ENCODE measurements at regions of chr22 and their contacts with region 1.

Region 1: DNA sequence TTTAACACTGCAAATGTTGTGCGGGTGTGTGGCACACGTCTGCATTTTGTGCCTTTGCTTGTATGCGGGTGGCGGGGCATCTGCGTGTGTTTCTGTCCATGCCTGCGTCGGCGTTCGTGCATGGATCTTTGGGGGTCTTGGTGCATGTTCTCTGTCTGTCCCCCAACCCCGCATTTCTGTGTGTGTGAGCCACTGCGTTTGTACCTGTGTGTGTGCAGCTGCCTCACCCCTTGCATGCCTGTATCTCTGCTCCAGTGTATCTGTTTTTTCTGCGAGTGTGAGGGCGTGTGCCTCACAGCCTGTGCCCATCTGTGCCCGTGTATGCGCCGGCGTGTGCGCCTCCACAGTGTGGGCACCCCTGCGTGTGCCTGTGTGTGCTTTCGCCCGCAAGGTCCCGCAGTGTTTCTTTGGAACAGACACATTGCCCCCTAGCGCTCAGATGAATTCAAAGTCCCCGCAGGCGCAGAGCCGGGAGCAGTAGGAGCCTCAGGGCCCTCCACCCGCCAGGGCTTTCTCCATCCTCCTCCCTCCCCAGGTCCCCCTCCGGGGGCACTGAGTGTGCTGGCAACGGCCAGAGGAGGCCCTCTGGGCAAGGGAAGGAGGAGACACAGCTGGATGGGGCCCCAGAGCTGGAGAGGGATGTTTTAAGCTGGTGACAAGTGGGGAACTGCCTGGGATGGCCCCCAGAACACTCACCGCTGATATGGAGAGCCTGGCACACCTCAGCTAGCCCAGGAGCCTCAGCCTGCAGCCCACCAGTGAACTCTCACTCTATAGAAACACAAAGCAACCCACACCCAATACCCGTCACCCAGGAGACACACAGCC is 3.1 kb upstream of the MN1 start:
- DNase-seq: peak; percentile 47 to 72
- ATAC-seq: peak; percentile 32 to 38
- H3K4me3 ChIP-seq: no peak overlapping the region
- H3K27ac ChIP-seq: peak overlapping the region in 2 of 4 donors; percentile 14 to 32
- H3K4me1 ChIP-seq: peaks cover 10 to 37% of the 10 kb centered on the region in 2 donors
- H3K27me3 ChIP-seq: no peaks in the 10 kb centered on the region
- CTCF ChIP-seq: peak; percentile 52 to 80 (median 73)
- POLR2A ChIP-seq: no peak

Region 2: DNA sequence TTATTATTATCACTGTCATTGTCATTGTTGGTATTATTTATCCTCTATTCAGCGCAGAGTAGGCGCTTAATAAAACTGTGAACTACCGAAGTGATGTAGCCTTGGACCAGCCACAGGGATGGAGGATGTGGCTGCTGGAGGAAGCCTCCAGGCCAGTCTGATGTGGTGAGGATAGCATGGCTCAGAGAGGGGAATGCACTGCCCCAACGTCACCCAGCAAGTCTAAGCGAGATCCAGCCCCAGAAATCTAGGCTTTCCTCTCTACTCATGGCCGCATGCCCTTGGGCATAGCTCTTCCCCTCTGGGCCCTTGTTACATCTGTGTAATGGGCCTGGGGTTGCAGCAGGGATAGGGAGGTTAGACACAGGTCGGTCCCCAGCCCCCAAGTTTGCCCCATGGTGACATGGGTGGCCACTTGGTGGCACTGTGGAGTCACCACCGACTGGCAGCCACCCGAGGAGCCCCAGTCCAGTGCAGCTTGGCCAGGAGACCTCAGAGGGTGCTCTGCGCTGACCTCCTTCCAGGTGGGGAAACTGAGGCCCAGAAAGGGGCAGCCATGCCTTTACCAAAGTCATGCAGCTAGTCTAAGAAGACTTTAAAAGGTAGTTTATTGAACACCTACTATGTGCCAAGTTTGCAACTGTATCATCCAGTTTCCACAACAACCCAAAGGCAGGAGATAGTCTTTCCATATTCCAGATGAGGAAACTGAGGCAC is 398.9 kb before region 1 on chr22:
- in situ Hi-C with region 1: loop called in 3 of 4 experiments (anchors 10 kb)
- intact Hi-C with region 1: no loop called
- DNase-seq: peak; percentile 23 to 49
- ATAC-seq: peak; percentile 62 to 91
- H3K4me3 ChIP-seq: no peak overlapping the region
- H3K27ac ChIP-seq: no peak overlapping the region
- H3K4me1 ChIP-seq: no peaks in the 10 kb centered on the region
- H3K27me3 ChIP-seq: peaks cover 0 to 3% (median 0%) of the 10 kb centered on the region in 3 donors
- CTCF ChIP-seq: peak; percentile 50 to 85 (median 79)
- POLR2A ChIP-seq: no peak

Region 3: GRCh38 chr22:27507111-27507611 is 297.5 kb before region 1 on chr22:
- in situ Hi-C with region 1: no loop called
- intact Hi-C with region 1: loop called (anchors 5 kb)
- DNase-seq: no peak
- ATAC-seq: no peak
- H3K4me3 ChIP-seq: no peak overlapping the region
- H3K27ac ChIP-seq: peak overlapping the region in 2 of 4 donors; percentile 4 to 36
- H3K4me1 ChIP-seq: peaks cover 57 to 62% of the 10 kb centered on the region in 2 donors
- H3K27me3 ChIP-seq: no peaks in the 10 kb centered on the region
- CTCF ChIP-seq: no peak
- POLR2A ChIP-seq: no peak

Region 4: DNA sequence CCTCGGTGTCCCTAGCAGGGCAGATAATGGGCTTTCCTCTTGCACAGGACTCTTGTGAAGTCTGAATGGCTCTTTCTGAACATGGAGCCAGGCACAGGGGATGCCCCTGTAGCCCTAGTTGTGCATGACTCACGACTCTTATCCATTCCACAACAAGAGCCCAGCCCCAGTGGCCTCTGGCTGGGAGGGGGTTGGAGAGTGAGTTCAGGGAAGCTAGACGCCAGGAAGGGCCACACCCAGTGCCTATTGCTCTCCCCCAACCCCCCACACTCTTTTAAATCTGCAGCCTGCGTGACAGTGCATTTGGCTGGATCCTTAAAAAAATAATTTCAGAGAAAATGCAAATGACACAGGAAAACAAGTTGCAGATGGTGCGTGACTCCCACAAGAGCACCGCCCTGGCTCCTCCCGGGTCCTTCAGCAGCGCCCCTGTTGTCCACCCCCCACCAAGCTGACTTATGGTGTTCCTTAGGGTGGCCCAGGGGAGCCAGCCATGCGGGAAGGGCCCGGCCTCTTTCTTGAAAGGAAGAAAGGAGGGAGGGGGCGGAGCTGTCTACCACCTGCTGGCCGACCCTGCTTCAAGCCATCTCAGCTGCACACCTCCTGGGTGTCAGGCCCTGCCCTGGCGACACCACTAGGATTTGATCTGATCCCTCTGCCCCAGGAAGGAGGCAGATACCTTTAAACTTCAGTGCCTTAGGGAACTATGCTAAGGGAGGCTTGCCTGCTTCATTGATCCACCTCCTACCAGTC is 77.8 kb before region 1 on chr22:
- in situ Hi-C with region 1: no loop called
- intact Hi-C with region 1: loop called (anchors 2 kb)
- DNase-seq: no peak
- ATAC-seq: peak; percentile 16 to 50
- H3K4me3 ChIP-seq: no peak overlapping the region
- H3K27ac ChIP-seq: peak overlapping the region; percentile 29 to 69 (median 58)
- H3K4me1 ChIP-seq: peaks cover 23 to 28% of the 10 kb centered on the region in 2 donors
- H3K27me3 ChIP-seq: no peaks in the 10 kb centered on the region
- CTCF ChIP-seq: no peak
- POLR2A ChIP-seq: no peak

Region 5: DNA sequence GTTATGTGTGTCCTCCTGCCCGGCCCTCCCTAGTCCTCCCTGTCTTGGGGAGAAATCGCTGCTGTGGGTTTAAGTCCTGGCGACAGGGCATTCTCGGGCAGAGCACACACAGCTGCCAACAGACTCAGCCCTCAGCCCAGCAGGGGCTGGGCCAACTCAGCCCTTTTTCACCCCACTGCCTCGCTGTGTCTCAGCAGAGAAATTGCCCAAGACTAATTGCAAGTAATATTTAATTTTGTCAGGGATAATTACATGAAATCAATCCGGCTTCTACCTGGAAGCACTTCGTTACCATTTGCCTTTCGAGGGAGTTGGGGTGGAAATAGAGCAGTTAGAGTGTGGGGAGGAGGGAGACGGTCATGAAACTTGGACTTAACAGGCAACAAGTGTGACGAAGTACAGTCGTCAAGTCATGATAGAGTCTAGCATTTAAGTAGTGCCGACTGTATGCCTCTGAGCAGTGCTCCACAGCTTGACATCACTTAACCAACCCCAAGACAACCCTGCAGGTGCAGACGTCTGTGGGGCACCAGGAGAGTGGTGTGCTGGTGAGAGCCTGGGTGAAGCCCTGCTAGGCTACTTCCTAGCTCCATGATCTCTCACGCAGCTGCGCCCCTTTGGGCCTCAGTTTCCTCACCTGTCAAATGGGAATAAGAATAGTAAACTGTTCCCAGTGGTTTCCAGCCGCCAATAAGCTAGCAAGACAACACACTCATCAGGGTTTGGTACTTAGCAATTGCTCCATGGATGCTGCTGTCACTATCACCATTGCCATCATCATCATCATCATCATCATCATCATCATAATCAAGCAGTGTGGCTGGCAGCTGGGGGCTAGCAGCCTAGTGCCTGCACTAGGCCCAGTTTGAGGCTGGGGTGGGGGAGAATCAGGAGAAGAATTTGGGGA is 32.4 kb before region 1 on chr22:
- in situ Hi-C with region 1: no loop called
- intact Hi-C with region 1: no loop called
- DNase-seq: no peak
- ATAC-seq: no peak
- H3K4me3 ChIP-seq: no peak overlapping the region
- H3K27ac ChIP-seq: peak overlapping the region; percentile 35 to 94 (median 66)
- H3K4me1 ChIP-seq: peaks cover 23 to 44% of the 10 kb centered on the region in 2 donors
- H3K27me3 ChIP-seq: no peaks in the 10 kb centered on the region
- CTCF ChIP-seq: no peak
- POLR2A ChIP-seq: no peak